WTC11 (cell line): ENCODE measurements at regions of chr9 and their contacts with region 1.

Region 1: GRCh38 chr9:108521063-108521590 is 334.7 kb downstream of the ACTL7B start:
- DNase-seq: no peak
- ATAC-seq: no peak
- H3K4me3 Mint-ChIP-seq: no peak overlapping the region
- H3K27ac Mint-ChIP-seq: no peak overlapping the region
- H3K4me1 Mint-ChIP-seq: no peaks in the 10 kb centered on the region; the same call in 1 of the 2 replicates
- H3K27me3 Mint-ChIP-seq: no peaks in the 10 kb centered on the region
- CTCF ChIP-seq: no peak

Region 2: GRCh38 chr9:108603141-108603540 is 82.0 kb after region 1 on chr9:
- CTCF ChIA-PET with region 1: no interaction called
- POLR2A ChIA-PET with region 1: interaction called, 13 read pairs
- DNase-seq: no peak
- ATAC-seq: no peak
- H3K4me3 Mint-ChIP-seq: no peak overlapping the region
- H3K27ac Mint-ChIP-seq: no peak overlapping the region
- H3K4me1 Mint-ChIP-seq: peaks cover 8% of the 10 kb centered on the region
- H3K27me3 Mint-ChIP-seq: no peaks in the 10 kb centered on the region; the same call in 1 of the 2 replicates
- CTCF ChIP-seq: no peak